ENCODE measurements at regions of chr1 and their contacts with region 1.

Region 1: DNA sequence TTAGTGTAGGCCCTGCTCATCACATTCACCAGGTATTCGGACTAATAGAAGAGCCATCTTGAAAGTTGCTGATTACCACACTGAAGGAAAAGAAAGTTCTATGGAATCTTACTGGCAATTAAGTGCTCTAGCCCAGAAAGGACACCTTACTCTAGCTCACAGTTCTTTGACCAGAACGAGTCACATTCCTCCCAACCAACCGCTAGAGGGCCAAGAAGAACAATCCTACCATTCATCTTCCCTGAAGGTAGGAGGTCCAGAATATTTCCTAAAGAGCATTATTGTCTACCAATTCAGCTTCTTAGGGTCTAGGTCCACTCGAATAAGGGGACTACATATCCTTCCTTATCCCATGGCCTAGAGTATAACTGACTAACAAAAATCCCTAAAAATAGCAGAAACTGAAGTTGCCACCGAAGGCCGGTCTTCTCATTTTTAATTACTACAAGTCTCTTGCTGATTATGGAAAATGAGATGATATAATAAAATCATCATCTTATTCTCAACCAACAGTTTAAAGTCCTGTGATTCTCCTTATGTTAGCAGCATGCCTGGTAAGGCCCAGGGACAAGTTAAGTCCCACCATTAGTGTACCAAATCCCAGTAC is 2.7 kb upstream of the FMO1 start:
- DNase-seq: peak; percentile 77
- H3K4me3 Mint-ChIP-seq: no peak overlapping the region
- H3K27ac Mint-ChIP-seq: no peak overlapping the region
- H3K4me1 Mint-ChIP-seq: no peaks in the 10 kb centered on the region
- H3K27me3 Mint-ChIP-seq: peaks cover 15% of the 10 kb centered on the region
- CTCF ChIP-seq: peak; percentile 78

Region 2: GRCh38 chr1:171081314-171081753 is 164.2 kb before region 1 on chr1:
- CTCF ChIA-PET with region 1: interaction called, 38 read pairs
- POLR2A ChIA-PET with region 1: no interaction called
- intact Hi-C with region 1: no loop called
- DNase-seq: peak; percentile 52
- H3K4me3 Mint-ChIP-seq: no peak overlapping the region
- H3K27ac Mint-ChIP-seq: no peak overlapping the region
- H3K4me1 Mint-ChIP-seq: no peaks in the 10 kb centered on the region
- H3K27me3 Mint-ChIP-seq: no peaks in the 10 kb centered on the region
- CTCF ChIP-seq: peak; percentile 34

Region 3: DNA sequence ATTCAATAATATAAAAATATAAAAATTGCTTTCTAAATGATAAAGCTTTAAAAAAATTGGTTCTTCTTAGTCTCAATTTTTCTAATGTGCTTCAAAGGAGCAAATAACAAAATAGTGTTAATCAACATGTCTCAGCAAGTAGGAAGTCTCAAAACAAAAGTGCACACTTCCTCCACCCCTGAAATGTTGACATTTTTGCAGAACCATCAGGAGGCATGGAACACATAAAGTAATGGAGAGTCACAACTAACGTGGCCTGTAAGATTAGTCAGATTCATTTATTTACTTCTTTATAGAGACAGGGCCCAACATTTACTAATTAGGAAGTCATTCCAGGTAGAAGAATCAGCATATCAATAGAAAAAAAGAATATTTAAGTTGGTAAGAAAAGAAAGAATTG is 95.4 kb before region 1 on chr1:
- CTCF ChIA-PET with region 1: no interaction called
- POLR2A ChIA-PET with region 1: no interaction called
- intact Hi-C with region 1: no loop called
- DNase-seq: no peak
- H3K4me3 Mint-ChIP-seq: no peak overlapping the region
- H3K27ac Mint-ChIP-seq: no peak overlapping the region
- H3K4me1 Mint-ChIP-seq: no peaks in the 10 kb centered on the region
- H3K27me3 Mint-ChIP-seq: no peaks in the 10 kb centered on the region
- CTCF ChIP-seq: no peak

Region 4: DNA sequence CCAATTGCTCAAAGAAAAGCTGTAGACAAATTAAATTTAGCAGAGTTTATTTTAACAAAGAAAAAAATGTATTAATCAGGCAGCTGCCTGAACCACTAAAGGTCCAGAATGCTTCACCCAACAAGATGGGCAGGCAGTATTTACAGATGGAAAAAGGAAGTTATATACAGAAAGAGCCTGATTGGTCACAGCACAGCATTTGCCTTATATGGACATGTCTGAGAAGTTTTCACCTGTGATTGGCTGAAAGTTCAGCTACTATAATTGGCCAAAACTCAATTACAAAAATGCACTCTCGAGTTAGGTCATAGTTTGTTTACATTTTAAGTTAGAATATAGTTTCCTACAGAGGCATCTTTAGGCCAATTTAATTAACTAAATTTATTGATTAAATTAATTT is 12.4 kb before region 1 on chr1:
- CTCF ChIA-PET with region 1: interaction called, 181 read pairs
- POLR2A ChIA-PET with region 1: interaction called, 5 read pairs
- intact Hi-C with region 1: no loop called
- DNase-seq: no peak
- H3K4me3 Mint-ChIP-seq: no peak overlapping the region
- H3K27ac Mint-ChIP-seq: no peak overlapping the region
- H3K4me1 Mint-ChIP-seq: no peaks in the 10 kb centered on the region
- H3K27me3 Mint-ChIP-seq: no peaks in the 10 kb centered on the region
- CTCF ChIP-seq: no peak

Region 5: DNA sequence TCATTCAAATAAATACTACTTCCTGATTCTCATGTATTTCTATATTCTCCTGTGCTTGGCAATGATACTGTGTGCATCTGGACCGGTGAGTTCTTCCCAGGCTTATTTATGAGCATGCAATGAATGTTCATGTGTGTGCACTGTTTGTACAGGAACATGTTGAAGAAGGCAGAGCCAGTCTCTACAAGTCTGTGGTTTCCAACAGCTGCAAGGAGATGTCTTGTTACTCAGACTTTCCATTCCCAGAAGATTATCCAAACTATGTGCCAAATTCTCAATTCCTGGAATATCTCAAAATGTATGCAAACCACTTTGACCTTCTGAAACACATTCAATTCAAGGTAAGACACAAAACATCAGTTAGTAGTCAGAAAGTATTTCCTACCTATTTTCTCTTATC is 21.8 kb after region 1 on chr1:
- CTCF ChIA-PET with region 1: interaction called, 48 read pairs
- POLR2A ChIA-PET with region 1: no interaction called
- intact Hi-C with region 1: no loop called
- DNase-seq: no peak
- H3K4me3 Mint-ChIP-seq: no peak overlapping the region
- H3K27ac Mint-ChIP-seq: no peak overlapping the region
- H3K4me1 Mint-ChIP-seq: peaks cover 8% of the 10 kb centered on the region
- H3K27me3 Mint-ChIP-seq: no peaks in the 10 kb centered on the region
- CTCF ChIP-seq: no peak

Region 6: DNA sequence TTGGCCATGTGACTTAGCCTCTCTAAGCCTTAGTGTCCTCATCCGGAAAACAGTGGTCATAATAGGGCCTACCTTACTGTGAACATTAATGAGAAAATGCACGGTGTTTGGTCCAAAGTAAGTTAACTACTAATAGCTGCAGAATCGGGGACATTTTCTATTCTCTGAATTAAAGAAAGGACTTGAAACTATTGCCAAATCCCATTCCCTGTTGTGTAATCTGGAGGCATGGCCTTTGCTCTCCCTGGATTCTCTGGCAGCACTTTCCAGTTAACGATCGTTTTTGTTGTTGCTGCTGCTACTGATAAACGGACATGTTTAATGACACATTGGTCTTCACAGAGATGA is 98.9 kb after region 1 on chr1:
- CTCF ChIA-PET with region 1: no interaction called
- POLR2A ChIA-PET with region 1: no interaction called
- intact Hi-C with region 1: no loop called
- DNase-seq: peak; percentile 61
- H3K4me3 Mint-ChIP-seq: no peak overlapping the region
- H3K27ac Mint-ChIP-seq: no peak overlapping the region
- H3K4me1 Mint-ChIP-seq: no peaks in the 10 kb centered on the region
- H3K27me3 Mint-ChIP-seq: no peaks in the 10 kb centered on the region
- CTCF ChIP-seq: no peak

Region 7: GRCh38 chr1:171366099-171366498 is 120.5 kb after region 1 on chr1:
- CTCF ChIA-PET with region 1: interaction called, 13 read pairs
- POLR2A ChIA-PET with region 1: no interaction called
- intact Hi-C with region 1: no loop called
- DNase-seq: peak; percentile 56
- H3K4me3 Mint-ChIP-seq: no peak overlapping the region
- H3K27ac Mint-ChIP-seq: no peak overlapping the region
- H3K4me1 Mint-ChIP-seq: no peaks in the 10 kb centered on the region
- H3K27me3 Mint-ChIP-seq: peaks cover 7% of the 10 kb centered on the region
- CTCF ChIP-seq: no peak

Measured in MCF 10A (cell line).